HCT116 (cell line): ENCODE measurements at regions of chr6 and their contacts with region 1.

Region 1: DNA sequence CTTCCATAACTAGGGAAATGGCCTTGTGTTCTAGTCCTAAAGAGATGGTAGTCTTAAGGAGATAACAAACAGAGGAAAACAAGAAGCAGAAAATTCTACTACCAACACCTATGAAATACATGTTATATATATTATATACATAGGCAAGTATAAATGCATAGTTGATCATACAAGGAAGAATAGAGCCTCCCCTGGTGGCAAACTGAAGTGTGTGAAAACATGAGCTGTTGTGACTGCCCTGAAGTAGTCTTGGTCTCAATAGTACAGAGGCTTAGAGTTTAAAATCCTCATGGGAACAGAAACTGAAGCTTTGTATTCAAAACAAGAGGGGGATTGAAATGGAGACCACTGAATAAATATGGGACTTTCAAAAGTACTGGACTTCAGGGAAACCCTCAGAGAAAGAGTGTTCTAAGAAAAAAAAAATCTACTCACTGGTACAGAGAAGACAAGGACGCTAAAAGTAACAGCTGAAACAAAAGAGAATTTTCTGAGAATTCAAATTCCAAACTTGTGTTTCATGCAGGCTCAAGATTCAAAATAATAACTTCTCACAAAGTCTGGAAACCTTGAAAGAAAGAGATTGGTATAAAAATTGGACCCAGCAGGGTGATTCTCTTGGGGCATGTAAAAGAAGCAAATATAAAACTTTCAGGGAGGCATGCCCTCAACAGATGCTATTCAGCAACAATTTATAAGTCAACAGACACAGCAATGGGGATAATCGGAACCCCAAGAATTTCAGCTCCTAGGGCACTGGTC is 59.7 kb upstream of the SAMD3 start:
- DNase-seq: peak; percentile 10
- ATAC-seq: peak; percentile 76
- H3K4me3 ChIP-seq: no peak overlapping the region
- H3K27ac ChIP-seq: no peak overlapping the region
- H3K4me1 ChIP-seq: no peaks in the 10 kb centered on the region
- H3K27me3 ChIP-seq: no peaks in the 10 kb centered on the region
- CTCF ChIP-seq: peak; percentile 38 to 57 (median 47); a peak in 5 of 6 replicates
- POLR2A ChIP-seq: no peak
- RAD21 ChIP-seq: peak; percentile 58

Region 2: GRCh38 chr6:130037207-130037811 is 245.1 kb before region 1 on chr6:
- CTCF ChIA-PET with region 1: interaction called, 4 read pairs
- POLR2A ChIA-PET with region 1: no interaction called
- RAD21 ChIA-PET with region 1: no interaction called
- intact Hi-C with region 1: loop called (anchors 2 kb)
- DNase-seq: no peak
- ATAC-seq: no peak
- H3K4me3 ChIP-seq: no peak overlapping the region
- H3K27ac ChIP-seq: no peak overlapping the region
- H3K4me1 ChIP-seq: peaks cover 23 to 26% of the 10 kb centered on the region in 2 experiments
- H3K27me3 ChIP-seq: no peaks in the 10 kb centered on the region
- CTCF ChIP-seq: peak; percentile 35 to 67 (median 39); a peak in 4 of 6 replicates
- POLR2A ChIP-seq: no peak
- RAD21 ChIP-seq: peak; percentile 37; the same call in 1 of the 2 replicates

Region 3: GRCh38 chr6:130069485-130069884 is 212.9 kb before region 1 on chr6:
- CTCF ChIA-PET with region 1: no interaction called
- POLR2A ChIA-PET with region 1: no interaction called
- RAD21 ChIA-PET with region 1: no interaction called
- intact Hi-C with region 1: loop called (anchors 10 kb)
- DNase-seq: no peak
- ATAC-seq: no peak
- H3K4me3 ChIP-seq: no peak overlapping the region
- H3K27ac ChIP-seq: no peak overlapping the region
- H3K4me1 ChIP-seq: no peaks in the 10 kb centered on the region
- H3K27me3 ChIP-seq: no peaks in the 10 kb centered on the region
- CTCF ChIP-seq: no peak
- POLR2A ChIP-seq: no peak
- RAD21 ChIP-seq: no peak